ENCODE measurements at regions of chr18 and their contacts with region 1.

Region 1: DNA sequence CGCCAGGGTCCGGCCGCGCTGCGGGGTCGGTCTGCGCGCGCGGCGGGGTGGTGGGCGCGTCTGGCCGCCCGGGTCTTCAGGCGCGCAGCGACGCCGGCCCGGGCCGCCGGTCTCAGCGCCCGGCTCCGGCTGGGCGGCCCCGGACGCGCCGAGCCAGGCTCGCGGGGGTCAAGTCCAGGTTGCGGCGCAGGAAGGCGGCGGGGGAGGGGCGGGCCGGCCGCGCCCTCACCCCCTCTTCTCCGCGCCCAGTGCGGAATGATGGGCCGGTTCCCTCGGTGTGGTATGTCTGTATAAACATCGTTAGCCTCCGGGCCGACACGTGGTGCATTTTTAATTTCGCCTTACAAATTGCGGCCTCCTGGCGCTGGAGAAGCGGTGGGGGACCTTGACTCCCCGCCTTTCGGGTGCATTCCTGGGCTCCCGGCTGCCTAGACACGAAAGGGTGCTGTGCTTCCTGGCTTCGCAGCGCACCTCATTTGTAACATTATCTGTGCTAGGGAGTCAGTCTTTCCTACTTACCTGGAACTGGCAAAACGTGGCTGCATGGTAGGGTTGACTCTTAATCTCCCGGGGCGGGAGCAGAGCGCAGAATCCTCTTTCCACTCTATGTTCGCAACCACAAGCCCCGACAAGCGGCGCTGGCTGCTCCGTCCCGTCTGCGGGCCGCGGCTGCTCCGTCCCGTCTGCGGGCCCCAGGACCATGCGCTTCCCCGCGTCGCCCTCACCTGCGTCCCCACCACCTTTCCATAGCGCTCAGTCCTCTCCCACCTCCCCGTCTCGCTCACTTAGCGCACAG is 69.0 kb downstream of the CTAGE1 start:
- DNase-seq: peak; percentile 68 to 81
- ATAC-seq: peak; percentile 67 to 79 (median 74)
- H3K4me3 ChIP-seq: peak overlapping the region; percentile 18 to 65 (median 58)
- H3K27ac ChIP-seq: peak overlapping the region; percentile 88 to 97 (median 94)
- H3K4me1 ChIP-seq: peaks cover 10 to 64% (median 44%) of the 10 kb centered on the region in 9 donors
- H3K27me3 ChIP-seq: peaks cover 0 to 45% (median 0%) of the 10 kb centered on the region in 7 donors
- CTCF ChIP-seq: peak in 1 of 9 donors; percentile 17

Region 2: DNA sequence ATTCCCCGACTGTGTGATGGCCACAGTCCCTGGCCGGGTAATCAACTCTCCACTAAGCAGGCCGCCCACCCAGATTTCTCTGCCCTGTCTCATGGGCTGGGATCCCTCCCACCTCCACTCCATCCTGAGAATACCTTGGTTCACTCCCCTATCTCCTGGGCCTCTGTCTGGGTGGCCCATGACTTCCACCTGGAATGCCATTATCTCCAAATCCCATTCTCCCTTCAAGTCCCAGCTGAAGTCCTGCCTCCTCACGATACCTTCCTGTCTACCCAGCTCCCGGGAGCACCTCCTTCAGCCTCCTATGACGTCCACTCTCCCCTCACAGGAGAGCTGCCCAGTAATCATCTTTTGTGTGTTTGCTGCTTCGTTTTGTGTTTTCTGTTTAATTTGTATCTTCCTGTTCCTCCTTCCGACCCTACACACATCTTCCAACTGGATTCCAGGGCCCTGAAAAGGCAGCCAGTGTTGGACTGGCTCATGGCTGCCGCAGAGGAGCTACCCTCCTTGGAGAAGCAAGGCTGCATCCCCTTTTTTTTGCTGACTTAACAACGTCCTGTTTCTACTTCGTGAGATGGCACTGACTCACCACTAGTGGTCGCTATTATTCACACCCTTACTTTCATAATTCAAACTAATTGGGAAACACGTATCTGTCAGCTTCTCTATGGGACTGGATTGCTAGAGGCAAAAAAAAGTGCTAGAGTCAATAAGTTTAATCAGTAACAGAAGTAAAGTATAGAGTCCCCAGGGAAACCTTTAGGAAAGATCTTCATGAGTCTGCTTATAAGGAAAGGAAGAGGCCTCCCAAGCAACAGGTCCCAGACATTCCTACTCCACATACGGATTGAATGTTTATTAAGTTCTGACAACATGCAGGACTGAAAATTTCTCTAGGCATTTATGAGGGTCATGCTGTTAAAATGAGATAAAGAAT is 351.2 kb before region 1 on chr18:
- intact Hi-C with region 1: loop called in 2 of 10 experiments (anchors 10 kb)
- DNase-seq: peak in 1 of 2 donors; percentile 20
- ATAC-seq: peak; percentile 32 to 87 (median 65)
- H3K4me3 ChIP-seq: no peak overlapping the region
- H3K27ac ChIP-seq: peak overlapping the region in 9 of 10 donors; percentile 17 to 82 (median 68)
- H3K4me1 ChIP-seq: peaks cover 0 to 34% (median 9%) of the 10 kb centered on the region in 9 donors
- H3K27me3 ChIP-seq: no peaks in the 10 kb centered on the region
- CTCF ChIP-seq: peak; percentile 65 to 90 (median 85)

Region 3: DNA sequence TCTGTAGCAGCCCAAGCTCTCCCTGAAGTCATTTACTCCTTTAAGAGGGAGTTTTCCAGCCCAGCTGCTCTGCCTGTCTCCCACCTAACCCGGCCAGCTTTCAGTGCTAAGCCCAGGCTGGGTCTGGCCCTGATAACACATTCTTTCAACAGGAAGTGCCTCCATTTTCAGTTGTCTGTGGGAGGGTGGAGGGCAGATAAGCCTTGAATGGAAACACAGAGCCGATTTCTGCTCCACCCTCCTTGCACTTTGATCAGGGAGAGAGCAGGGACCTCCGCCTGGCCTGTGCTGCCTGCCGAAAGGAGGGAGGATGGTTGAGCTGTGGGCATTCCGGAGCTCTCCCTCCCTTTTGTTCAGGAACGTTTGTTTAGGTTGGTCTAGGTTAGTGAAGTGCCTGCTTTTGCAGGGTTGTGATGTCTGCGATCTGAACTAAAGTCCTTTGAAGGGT is 154.5 kb before region 1 on chr18:
- intact Hi-C with region 1: loop called in 1 of 10 experiments (anchors 10 kb)
- DNase-seq: no peak
- ATAC-seq: peak; percentile 11 to 65 (median 48)
- H3K4me3 ChIP-seq: peak overlapping the region in 5 of 10 donors; percentile 4 to 31 (median 12)
- H3K27ac ChIP-seq: peak overlapping the region; percentile 16 to 99 (median 74)
- H3K4me1 ChIP-seq: peaks cover 6 to 99% (median 88%) of the 10 kb centered on the region in 9 donors
- H3K27me3 ChIP-seq: no peaks in the 10 kb centered on the region
- CTCF ChIP-seq: no peak

Region 4: DNA sequence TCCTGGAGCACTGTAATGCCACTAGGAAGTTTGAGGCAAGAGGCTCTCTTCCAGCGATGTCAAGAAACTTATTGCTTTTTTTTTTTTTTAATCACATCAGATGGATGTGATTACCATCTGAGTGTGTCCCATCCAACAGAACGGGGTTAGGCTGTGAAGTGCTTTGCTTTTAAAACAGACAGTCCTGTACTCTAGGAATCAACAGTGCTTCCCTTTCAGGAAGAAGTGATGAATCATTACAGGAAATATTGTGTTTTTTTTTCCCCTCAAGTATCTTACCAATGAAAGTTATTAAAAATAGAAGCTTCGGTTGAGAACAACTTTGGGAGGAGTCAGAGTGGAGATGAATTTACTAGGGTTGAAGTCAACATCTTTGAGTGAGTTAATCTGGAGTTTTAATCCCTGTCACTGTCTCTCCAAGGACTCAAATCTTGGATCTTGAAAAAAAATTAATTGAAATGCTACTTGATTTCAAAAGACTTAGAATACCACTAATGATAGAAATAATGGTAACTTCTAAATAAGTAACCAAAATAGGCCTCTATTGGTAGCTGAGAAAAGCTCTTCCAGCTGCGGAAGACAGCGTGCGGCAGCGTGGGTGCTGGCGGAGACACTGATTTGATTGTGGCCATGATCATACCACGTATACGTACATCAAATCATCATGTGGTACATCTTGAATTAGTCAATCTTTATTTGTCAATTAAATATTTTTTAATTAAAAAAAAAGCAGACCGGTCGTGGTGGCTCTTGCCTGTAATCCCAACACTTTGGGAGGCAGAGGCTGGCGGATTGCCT is 133.8 kb before region 1 on chr18:
- intact Hi-C with region 1: loop called in 1 of 10 experiments (anchors 5 kb)
- DNase-seq: no peak
- ATAC-seq: peak in 5 of 8 donors; percentile 15 to 59 (median 36)
- H3K4me3 ChIP-seq: no peak overlapping the region
- H3K27ac ChIP-seq: peak overlapping the region in 2 of 10 donors; percentile 13 to 26
- H3K4me1 ChIP-seq: peaks cover 0 to 56% (median 33%) of the 10 kb centered on the region in 9 donors
- H3K27me3 ChIP-seq: no peaks in the 10 kb centered on the region
- CTCF ChIP-seq: no peak

Region 5: GRCh38 chr18:22279741-22280452 is 68.8 kb before region 1 on chr18:
- intact Hi-C with region 1: loop called in 3 of 10 experiments (anchors 2 to 5 kb)
- DNase-seq: no peak
- ATAC-seq: peak in 2 of 8 donors; percentile 39 to 57
- H3K4me3 ChIP-seq: no peak overlapping the region
- H3K27ac ChIP-seq: peak overlapping the region in 9 of 10 donors; percentile 42 to 92 (median 85)
- H3K4me1 ChIP-seq: peaks cover 0 to 55% (median 16%) of the 10 kb centered on the region in 9 donors
- H3K27me3 ChIP-seq: no peaks in the 10 kb centered on the region
- CTCF ChIP-seq: no peak

Region 6: GRCh38 chr18:22293417-22293816 is 55.3 kb before region 1 on chr18:
- intact Hi-C with region 1: no loop called
- DNase-seq: no peak
- ATAC-seq: peak in 1 of 8 donors; percentile 15
- H3K4me3 ChIP-seq: no peak overlapping the region
- H3K27ac ChIP-seq: no peak overlapping the region
- H3K4me1 ChIP-seq: peaks cover 0 to 7% (median 0%) of the 10 kb centered on the region in 9 donors
- H3K27me3 ChIP-seq: no peaks in the 10 kb centered on the region
- CTCF ChIP-seq: no peak

Region 7: GRCh38 chr18:22465859-22466457 is 117.2 kb after region 1 on chr18:
- intact Hi-C with region 1: loop called in 1 of 10 experiments (anchors 5 kb)
- DNase-seq: peak in 1 of 2 donors; percentile 74
- ATAC-seq: peak; percentile 85 to 95 (median 90)
- H3K4me3 ChIP-seq: no peak overlapping the region
- H3K27ac ChIP-seq: peak overlapping the region; percentile 56 to 90 (median 85)
- H3K4me1 ChIP-seq: peaks cover 15 to 48% (median 42%) of the 10 kb centered on the region in 9 donors
- H3K27me3 ChIP-seq: no peaks in the 10 kb centered on the region
- CTCF ChIP-seq: no peak

Measured in heart right ventricle (tissue), 16 donors.